Activated CD4-positive, alpha-beta T cell treated with anti-CD3 and anti-CD28 coated beads, Interleukin-2, amount 10 ng/mL, durations not matched to agents 24 days and 14 days (primary cell): ENCODE measurements at regions of chr6 and their contacts with region 1.

Region 1: DNA sequence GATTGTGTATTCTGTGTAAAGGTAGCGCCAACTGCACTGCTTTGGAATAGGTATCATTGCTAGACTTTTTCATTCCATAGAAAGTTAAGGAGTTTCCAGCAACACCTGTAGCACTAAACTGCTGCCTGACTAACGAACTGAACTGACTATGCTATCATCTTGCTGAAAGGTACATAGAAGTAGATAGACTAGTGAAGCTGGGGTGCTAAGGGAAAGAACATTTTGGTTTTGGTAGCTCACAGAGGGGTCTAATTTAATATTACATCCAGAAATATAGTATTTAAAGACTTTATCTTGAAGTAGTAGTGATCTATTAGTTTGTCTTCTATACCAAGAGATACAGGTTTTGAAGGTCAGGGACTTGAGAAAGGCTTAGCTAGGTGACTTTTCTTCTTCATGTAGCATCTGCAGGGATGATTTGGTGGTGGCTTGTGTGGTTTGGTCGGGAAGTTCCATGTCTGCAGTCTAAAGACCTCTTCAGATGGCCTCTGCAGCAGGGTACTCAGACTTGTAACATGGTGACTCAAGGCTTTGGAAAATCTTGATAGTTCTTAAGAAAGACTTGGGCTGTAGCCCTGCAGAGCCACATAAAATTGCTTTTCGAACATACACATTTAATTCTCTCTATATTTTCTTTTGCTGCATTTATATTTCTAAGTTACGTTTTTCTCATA is 10.2 kb downstream of the SENP6 start:
- DNase-seq: peak; percentile 74
- H3K4me3 Mint-ChIP-seq: peak overlapping the region; percentile 48
- H3K27ac Mint-ChIP-seq: peak overlapping the region; percentile 76
- H3K4me1 Mint-ChIP-seq: peaks cover 62% of the 10 kb centered on the region
- H3K27me3 Mint-ChIP-seq: no peaks in the 10 kb centered on the region

Region 2: DNA sequence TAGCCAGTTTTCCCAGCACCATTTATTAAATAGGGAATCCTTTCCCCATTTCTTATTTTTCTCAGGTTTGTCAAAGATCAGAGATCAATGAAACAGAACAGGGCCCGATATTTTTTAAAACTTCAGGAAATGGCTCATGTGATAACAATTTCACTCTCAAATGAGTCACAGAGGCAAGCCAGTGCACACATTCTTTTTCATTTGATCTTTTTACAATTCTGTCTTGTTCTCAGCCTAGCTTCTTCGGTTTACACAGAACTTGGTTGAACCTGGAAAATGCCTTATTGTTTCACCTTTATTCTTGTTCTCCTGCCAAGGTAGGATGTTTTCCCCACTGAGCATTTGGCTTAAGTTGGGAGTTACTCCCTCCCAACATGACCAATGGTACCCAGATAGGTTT is 664.9 kb before region 1 on chr6:
- intact Hi-C with region 1: no loop called
- DNase-seq: no peak
- H3K4me3 Mint-ChIP-seq: no peak overlapping the region
- H3K27ac Mint-ChIP-seq: no peak overlapping the region
- H3K4me1 Mint-ChIP-seq: no peaks in the 10 kb centered on the region
- H3K27me3 Mint-ChIP-seq: no peaks in the 10 kb centered on the region

Region 3: DNA sequence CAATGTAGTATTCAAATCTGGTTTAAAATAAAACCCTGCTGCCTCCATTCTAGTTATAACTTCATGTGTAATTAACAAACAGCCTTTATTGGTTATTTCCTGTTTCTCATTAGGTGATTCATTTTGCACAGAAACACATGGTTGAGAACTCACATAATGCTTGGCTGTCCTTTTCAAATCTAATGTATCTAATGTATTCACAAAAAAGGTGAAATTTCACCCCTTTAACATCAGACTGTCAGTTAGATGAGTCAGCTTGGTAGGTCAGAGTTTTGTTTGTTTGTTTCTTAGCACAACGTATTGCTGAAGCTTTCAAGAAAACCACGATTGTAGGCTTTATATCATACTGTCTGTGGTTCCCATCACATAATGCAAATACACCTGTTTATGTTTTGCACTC is 248.5 kb before region 1 on chr6:
- intact Hi-C with region 1: no loop called
- DNase-seq: no peak
- H3K4me3 Mint-ChIP-seq: no peak overlapping the region
- H3K27ac Mint-ChIP-seq: no peak overlapping the region
- H3K4me1 Mint-ChIP-seq: no peaks in the 10 kb centered on the region
- H3K27me3 Mint-ChIP-seq: peaks cover 5% of the 10 kb centered on the region

Region 4: DNA sequence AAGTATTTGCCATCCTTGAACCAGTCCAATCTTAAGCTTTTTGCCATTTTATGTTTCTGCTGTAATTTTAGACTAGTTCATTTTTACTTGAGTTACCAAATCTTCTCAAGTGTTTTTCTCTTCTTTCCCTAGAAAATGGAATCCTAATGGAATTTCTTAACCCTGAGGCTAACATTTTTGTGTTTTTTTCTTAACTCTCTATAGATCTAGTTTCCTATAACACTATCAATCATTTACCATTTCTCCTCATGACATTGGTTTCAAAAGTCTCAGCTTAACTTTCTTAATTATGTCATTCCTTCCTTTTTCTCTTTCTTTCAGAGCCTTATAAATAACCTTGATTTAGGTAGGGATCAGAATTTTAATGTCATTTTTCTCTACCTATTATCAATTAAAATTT is 44.6 kb after region 1 on chr6:
- intact Hi-C with region 1: loop called (anchors 5 kb)
- DNase-seq: no peak
- H3K4me3 Mint-ChIP-seq: no peak overlapping the region
- H3K27ac Mint-ChIP-seq: no peak overlapping the region
- H3K4me1 Mint-ChIP-seq: no peaks in the 10 kb centered on the region
- H3K27me3 Mint-ChIP-seq: no peaks in the 10 kb centered on the region